ENCODE measurements at regions of chr4 and their contacts with region 1.

Region 1: DNA sequence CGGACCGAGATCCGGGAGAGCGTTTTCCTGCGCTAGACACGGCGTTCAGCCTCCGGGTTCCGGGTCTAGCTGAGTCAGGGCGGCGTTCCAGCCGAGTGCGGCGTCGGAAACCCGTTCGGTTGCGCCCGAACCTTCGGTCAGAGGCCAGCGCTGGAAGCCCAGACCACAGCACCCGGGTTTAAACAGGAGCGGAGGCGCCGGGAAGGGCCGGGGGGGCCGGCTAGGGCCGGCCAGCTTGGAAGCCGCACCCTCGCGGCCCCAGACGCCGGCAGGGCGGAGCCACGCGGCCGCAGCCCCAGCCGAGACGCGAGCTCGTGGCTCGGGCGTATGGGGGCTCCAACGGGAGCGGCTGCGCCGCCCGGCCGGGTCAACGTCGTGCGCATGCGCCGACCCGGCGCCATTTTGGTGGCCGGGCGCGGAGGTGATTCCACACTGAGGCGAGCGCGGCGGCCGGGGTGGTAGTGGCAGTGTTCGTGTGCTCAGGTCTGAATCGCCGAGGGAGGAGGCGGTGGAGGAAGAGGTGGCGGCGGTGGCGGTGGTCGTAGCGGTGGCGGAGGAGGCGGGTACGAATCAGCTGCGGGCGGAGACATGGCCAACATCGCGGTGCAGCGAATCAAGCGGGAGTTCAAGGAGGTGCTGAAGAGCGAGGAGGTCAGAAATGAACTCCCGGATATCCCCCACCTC is at the start of gene UBE2K:
- DNase-seq: peak; percentile 83
- ATAC-seq: peak; percentile 93
- H3K4me3 ChIP-seq: peak within 1 kb of the TSS; percentile 74 to 95 (median 79)
- H3K27ac ChIP-seq: peak within 1 kb of the TSS; percentile 96
- H3K4me1 ChIP-seq: peaks cover 18% of the 10 kb centered on the region
- H3K27me3 ChIP-seq: no peaks in the 10 kb centered on the region; a peak in 1 of 5 replicates
- CTCF ChIP-seq: no peak
- EP300 ChIP-seq: no peak; a peak in 1 of 4 replicates
- POLR2A ChIP-seq: peak; percentile 75 to 94
- RAD21 ChIP-seq: peak; percentile 49
- total RNA-seq, gene UBE2K: 36.2 and 72.9 TPM in 2 replicates

Region 2: DNA sequence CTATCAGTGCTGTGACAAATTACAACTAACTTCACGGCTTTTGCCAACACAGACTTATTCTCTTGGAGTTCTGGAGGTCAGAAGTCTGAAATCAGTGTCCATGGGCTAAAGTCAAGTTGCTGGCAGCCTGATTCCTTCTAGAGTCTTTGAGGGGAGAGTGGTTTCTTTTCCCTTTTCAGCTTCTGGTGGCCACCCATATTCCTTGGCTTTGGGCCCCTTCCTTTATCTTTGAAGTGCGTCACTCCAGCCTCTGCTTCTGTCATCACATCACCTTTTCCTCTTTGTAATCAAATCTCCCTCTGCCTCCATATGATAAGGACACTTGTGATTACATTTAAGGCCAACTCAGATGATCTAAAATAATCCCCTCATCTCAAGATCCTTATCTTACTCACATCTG is 821.2 kb before region 1 on chr4:
- CTCF ChIA-PET with region 1: no interaction called
- POLR2A ChIA-PET with region 1: no interaction called
- in situ Hi-C with region 1: no loop called
- intact Hi-C with region 1: loop called (anchors 5 kb)
- DNase-seq: no peak
- ATAC-seq: no peak
- H3K4me3 ChIP-seq: no peak overlapping the region
- H3K27ac ChIP-seq: no peak overlapping the region
- H3K4me1 ChIP-seq: peaks cover 39% of the 10 kb centered on the region
- H3K27me3 ChIP-seq: no peaks in the 10 kb centered on the region
- CTCF ChIP-seq: no peak
- EP300 ChIP-seq: no peak
- POLR2A ChIP-seq: no peak
- RAD21 ChIP-seq: no peak